PC-3 (cell line): ENCODE measurements at regions of chr7 and their contacts with region 1.

Region 1: GRCh38 chr7:74544706-74545469 is 91.2 kb downstream of the GTF2IRD1 start:
- DNase-seq: peak; percentile 79
- ATAC-seq: peak; percentile 84
- H3K4me3 ChIP-seq: no peak overlapping the region
- H3K27ac ChIP-seq: no peak overlapping the region; the same call in 1 of the 2 replicates
- H3K4me1 ChIP-seq: no peaks in the 10 kb centered on the region
- H3K27me3 ChIP-seq: no peaks in the 10 kb centered on the region
- CTCF ChIP-seq: peak; percentile 74

Region 2: DNA sequence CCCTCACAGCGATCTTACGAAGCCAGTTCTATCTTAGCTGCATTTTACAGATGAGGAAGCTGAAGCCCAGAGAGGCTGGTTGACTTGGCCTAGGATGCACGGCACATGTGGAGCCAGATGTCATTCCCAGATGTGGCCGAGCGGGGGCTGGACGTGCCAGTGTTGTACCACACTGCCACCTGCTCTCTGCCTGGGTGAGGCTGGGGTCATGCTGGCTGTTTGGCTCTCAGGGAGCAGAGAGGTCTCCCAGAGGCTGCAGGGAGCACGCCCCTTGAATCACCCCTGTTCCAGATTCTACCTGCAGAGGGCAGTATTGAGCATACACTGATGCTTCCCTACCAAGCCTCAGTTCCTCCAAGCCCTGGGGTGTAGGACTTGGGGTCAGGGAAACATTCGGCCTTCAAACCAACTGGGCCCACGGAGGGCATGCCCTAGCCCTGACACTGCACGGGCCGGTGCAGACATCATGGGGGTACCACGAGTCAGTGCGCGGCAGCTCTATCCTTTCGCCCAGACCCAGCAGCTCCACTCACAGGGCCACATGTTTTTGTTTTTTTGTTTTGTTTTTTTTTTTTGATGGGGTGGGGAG is 95.0 kb before region 1 on chr7:
- CTCF ChIA-PET with region 1: no interaction called
- POLR2A ChIA-PET with region 1: no interaction called
- intact Hi-C with region 1: loop called (anchors 1 kb)
- DNase-seq: peak; percentile 75
- ATAC-seq: no peak
- H3K4me3 ChIP-seq: no peak overlapping the region
- H3K27ac ChIP-seq: no peak overlapping the region
- H3K4me1 ChIP-seq: peaks cover 18% of the 10 kb centered on the region
- H3K27me3 ChIP-seq: no peaks in the 10 kb centered on the region
- CTCF ChIP-seq: peak; percentile 79